Activated T-helper 2 cell treated with anti-CD3 and anti-CD28 coated beads, Interferon-gamma antibody, Interleukin-2, Interleukin-4, amounts not matched to agents 10 μg/mL and 5 μg/mL and 100 μg/mL, durations not matched to agents 14 hours and 24 hours and 36 hours (primary cell): ENCODE measurements at regions of chr10 and their contacts with region 1.

Region 1: DNA sequence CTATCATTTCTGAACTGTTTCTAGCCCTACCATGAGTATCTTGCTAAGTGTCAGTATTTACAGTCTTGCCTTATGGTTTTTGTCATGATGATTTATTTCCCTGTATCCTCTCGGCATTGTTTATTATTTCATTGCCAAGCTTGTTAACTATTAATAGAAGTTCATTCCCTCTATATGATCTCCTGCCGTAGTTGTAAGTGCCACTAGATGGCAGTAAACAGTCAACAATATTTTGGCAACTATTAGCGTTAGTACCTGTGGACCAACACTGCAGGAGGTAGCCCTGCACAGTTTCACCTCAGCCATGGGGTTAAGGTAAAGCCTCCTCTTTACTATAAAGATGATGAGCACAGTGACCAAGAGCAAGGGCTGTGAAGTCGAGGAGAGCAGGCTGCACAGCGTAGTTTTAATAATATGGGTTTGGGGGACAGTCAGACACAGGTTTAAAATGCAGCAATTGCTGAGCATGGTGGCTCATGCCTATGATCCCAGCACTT is 26.1 kb upstream of the CCNJ start:
- DNase-seq: peak; percentile 23
- H3K4me3 Mint-ChIP-seq: no peak overlapping the region
- H3K27ac Mint-ChIP-seq: no peak overlapping the region
- H3K4me1 Mint-ChIP-seq: peaks cover 3% of the 10 kb centered on the region
- H3K27me3 Mint-ChIP-seq: peaks cover 8% of the 10 kb centered on the region

Region 2: GRCh38 chr10:96275685-96276418 is 258.6 kb after region 1 on chr10:
- intact Hi-C with region 1: no loop called
- DNase-seq: no peak
- H3K4me3 Mint-ChIP-seq: no peak overlapping the region
- H3K27ac Mint-ChIP-seq: no peak overlapping the region
- H3K4me1 Mint-ChIP-seq: no peaks in the 10 kb centered on the region
- H3K27me3 Mint-ChIP-seq: peaks cover 13% of the 10 kb centered on the region

Region 3: DNA sequence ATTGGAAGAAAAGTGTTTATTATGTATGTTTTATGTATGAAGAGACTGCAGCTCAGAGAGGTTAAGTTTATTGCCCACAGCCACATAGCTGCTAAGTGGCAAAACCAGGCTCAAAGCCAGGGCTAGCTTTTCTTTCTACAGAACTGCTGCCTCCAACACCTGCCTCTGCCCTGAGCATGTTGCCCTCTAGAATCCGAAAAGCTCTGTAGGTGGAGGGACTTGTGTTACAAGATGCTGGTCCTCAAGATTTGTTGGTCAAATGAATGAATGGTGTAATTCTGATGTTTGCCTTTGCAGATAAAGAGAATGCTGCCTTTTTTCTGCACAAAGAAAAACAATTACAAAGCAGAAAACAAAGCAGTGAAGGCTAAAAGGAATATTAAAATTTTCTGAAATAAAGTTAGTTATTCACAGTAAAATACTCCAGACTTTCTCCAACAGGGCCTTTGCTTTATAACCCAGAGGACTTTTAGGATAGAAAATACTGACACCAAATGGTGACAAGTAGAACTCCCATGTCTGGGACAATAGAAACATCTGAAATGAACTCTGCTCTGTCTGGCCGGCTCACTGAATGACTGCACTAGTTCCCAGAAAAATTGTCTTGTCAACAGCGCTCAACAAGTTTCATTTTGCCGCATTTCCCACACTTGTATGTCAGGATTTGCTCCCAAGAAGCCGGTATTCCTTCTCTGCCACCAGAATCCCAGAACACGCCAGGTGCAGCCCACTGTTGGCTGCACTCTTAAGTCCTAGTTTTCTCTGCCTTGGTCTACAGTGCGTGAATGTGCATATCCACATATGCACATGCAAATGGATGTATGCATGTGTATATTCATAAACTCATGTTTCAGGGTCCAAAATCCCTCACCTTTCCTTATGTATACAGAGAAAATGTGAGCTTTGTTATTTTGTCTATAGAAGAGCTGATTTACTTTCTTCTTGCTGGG is 276.0 kb after region 1 on chr10:
- intact Hi-C with region 1: loop called (anchors 5 kb)
- DNase-seq: no peak
- H3K4me3 Mint-ChIP-seq: no peak overlapping the region
- H3K27ac Mint-ChIP-seq: no peak overlapping the region
- H3K4me1 Mint-ChIP-seq: peaks cover 15% of the 10 kb centered on the region
- H3K27me3 Mint-ChIP-seq: peaks cover 4% of the 10 kb centered on the region

Region 4: DNA sequence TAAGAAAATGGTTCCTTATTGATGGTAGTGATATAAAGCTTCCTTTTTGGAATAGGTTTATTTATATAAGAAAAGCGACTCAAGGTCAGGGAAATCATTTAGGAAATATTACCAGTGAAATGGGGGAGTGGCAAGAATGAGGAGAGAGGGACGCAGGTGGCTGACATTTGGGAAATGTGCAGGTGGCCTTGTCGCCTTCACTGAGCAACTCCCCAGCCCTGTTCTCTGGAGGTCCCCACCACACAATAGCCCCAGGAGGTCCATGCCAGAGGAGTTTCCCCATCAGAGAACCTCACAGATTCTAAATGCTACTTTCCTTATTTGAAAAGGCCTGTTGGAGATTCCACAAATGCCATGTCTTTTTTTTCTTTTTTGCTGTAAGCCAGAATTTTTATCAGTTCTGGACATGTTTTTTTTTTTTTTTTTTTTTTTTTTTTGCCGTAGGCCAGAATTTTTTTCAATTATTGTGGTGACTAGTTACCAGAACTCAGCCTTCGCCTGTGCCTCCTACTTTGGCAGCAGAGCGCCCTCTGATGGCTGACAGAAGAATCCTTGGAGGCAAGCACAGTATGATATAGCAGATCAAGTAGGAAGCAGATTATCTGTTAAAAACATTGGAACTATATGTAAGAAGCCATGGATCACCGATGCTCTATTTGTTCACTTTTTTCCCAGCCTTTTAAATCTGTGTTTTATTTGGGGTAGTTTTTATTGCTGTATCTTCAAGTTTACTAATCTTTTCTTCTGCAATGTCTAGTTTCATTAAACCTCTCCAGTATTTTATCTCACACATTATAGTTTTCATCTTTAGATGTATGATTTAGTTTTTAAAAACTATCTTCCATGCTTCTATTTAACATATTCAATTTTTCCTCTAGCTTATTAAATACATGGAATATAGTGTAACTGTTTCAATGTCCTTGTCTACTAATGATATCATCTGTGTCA is 323.0 kb after region 1 on chr10:
- intact Hi-C with region 1: loop called (anchors 2 kb)
- DNase-seq: peak; percentile 26
- H3K4me3 Mint-ChIP-seq: no peak overlapping the region
- H3K27ac Mint-ChIP-seq: no peak overlapping the region
- H3K4me1 Mint-ChIP-seq: peaks cover 7% of the 10 kb centered on the region
- H3K27me3 Mint-ChIP-seq: peaks cover 28% of the 10 kb centered on the region

Region 5: GRCh38 chr10:97534746-97535367 is 1517.6 kb after region 1 on chr10:
- intact Hi-C with region 1: no loop called
- DNase-seq: no peak
- H3K4me3 Mint-ChIP-seq: no peak overlapping the region
- H3K27ac Mint-ChIP-seq: no peak overlapping the region
- H3K4me1 Mint-ChIP-seq: peaks cover 2% of the 10 kb centered on the region
- H3K27me3 Mint-ChIP-seq: no peaks in the 10 kb centered on the region